Activated CD4-positive, alpha-beta T cell treated with anti-CD3 and anti-CD28 coated beads for 36 hours (primary cell): ENCODE measurements at regions of chr9 and their contacts with region 1.

Region 1: DNA sequence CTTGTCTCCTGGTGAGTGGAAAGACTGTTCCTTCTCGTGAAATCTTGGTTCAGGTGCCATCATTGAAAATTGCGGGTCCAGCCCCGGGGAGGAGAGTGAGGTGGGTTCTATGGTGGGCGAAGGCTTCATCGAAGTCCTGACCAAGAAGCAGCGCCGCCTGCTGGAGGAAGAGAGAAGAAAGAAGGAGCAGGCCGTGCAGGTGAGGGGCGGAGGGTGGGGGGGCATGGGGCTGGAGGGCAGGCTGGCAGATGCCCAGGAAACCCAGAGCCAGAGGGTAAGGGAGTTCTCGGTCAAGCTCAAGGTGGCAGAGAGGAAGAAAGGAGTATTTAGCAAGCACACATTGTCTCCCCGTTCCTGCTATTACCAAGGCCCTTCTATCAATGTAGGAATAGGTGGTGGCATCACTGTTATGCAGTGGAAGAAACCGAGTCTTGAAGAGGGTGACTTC is 24.3 kb upstream of the POMT1 start:
- DNase-seq: peak; percentile 78
- ATAC-seq: peak; percentile 64
- H3K4me3 Mint-ChIP-seq: no peak overlapping the region
- H3K27ac Mint-ChIP-seq: no peak overlapping the region
- H3K4me1 Mint-ChIP-seq: peaks cover 5% of the 10 kb centered on the region
- H3K27me3 Mint-ChIP-seq: no peaks in the 10 kb centered on the region

Region 2: GRCh38 chr9:131366761-131367401 is 111.6 kb before region 1 on chr9:
- CTCF ChIA-PET with region 1: no interaction called
- POLR2A ChIA-PET with region 1: interaction called, 5 read pairs
- intact Hi-C with region 1: loop called in 1 of 2 experiments (anchors 5 kb)
- DNase-seq: no peak
- ATAC-seq: no peak
- H3K4me3 Mint-ChIP-seq: no peak overlapping the region
- H3K27ac Mint-ChIP-seq: no peak overlapping the region
- H3K4me1 Mint-ChIP-seq: peaks cover under 1% of the 10 kb centered on the region
- H3K27me3 Mint-ChIP-seq: no peaks in the 10 kb centered on the region

Region 3: DNA sequence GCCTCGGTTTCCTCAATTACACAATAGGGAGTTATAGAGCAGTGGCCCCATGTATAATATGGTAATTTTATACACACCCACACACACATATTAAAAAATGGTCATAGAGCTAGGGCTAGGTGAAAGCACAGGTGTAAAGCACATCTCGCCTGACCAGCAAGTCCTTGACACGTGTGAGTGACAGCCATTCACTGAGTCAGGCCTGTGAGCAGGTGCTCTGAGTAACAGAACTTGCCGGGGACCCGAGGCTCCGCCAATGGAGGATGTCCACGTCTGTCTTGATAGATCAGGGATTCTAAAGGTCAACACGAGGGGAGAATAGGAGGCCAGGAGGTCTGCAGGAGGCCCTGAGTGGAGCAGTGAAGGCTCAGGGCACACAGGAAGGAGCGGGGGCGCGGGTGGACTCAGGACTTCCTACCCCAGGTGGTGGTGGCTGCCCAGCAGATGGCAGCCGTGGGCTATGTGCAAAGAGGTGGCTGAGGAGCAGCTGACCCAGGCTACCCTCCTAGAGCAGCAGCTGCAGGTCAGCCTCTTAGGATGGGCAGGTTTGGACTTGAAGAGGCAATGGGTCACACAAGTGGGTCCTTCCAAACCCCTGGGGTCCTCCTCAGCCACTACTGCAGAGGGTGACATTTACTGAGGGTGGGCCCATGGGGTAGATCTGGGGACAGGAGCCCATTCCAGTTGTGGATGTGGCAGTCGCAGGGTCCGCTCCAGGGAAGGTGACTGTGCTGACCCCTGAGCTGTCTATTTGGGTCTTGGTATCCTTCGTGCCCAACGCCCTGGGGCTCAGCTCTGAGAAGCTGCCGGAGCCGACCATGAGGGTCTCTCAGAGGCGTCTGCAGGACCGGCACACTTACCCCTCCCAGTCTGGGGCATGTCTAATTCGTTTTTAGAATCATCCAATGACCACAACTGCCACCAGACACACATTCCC is 112.7 kb after region 1 on chr9:
- CTCF ChIA-PET with region 1: no interaction called
- POLR2A ChIA-PET with region 1: no interaction called
- intact Hi-C with region 1: no loop called
- DNase-seq: peak; percentile 90
- ATAC-seq: peak; percentile 94
- H3K4me3 Mint-ChIP-seq: no peak overlapping the region
- H3K27ac Mint-ChIP-seq: peak overlapping the region; percentile 85
- H3K4me1 Mint-ChIP-seq: peaks cover 28% of the 10 kb centered on the region
- H3K27me3 Mint-ChIP-seq: no peaks in the 10 kb centered on the region